Activated naive CD4-positive, alpha-beta T cell treated with anti-CD3 and anti-CD28 coated beads for 36 hours (primary cell): ENCODE measurements at regions of chr2 and their contacts with region 1.

Region 1: DNA sequence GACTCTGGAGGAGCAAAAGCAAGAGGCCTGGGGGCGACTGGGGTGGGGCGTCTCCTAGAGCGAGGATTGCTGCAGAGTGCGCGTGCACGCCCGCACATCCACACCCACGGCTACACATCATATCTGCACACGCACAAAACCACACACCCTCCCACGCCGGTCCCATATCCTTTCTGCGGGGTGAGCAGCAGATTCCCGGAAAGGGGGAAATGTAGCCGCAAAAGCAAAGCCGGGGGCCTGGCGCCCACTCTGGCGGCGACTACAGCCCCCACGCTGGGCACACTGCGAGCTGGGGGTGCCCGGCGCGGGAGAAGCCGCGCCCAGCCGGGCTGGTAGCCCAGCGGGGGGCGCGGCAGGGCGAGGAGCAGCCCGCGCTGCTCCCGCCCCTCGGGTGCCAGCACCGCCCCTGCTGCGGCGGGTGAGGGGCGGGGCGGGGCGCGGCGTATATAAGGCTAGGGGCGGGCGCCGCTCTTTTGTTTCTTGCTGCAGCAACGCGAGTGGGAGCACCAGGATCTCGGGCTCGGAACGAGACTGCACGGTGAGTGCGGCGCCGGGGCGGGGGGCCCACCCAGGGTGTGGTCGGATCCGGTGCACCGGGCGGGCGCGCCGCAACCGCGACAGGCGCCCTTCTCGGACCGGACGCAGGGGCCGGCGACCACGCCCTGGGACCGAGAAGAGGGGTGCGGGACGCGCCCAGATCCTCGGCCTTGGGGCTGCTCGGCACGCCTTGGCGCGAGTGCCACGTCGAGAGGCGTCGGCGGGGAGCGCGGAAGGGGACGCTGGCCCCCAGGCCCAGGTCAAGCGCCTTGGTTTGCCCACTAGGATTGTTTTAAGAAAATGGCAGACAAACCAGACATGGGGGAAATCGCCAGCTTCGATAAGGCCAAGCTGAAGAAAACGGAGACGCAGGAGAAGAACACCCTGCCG is at the start of gene TMSB10:
- DNase-seq: peak; percentile 82
- H3K4me3 Mint-ChIP-seq: peak within 1 kb of the TSS; percentile 86
- H3K27ac Mint-ChIP-seq: peak within 1 kb of the TSS; percentile 92
- H3K4me1 Mint-ChIP-seq: peaks cover 43% of the 10 kb centered on the region
- H3K27me3 Mint-ChIP-seq: no peaks in the 10 kb centered on the region
- total RNA-seq, gene TMSB10: 1,772 to 1,864 TPM

Region 2: DNA sequence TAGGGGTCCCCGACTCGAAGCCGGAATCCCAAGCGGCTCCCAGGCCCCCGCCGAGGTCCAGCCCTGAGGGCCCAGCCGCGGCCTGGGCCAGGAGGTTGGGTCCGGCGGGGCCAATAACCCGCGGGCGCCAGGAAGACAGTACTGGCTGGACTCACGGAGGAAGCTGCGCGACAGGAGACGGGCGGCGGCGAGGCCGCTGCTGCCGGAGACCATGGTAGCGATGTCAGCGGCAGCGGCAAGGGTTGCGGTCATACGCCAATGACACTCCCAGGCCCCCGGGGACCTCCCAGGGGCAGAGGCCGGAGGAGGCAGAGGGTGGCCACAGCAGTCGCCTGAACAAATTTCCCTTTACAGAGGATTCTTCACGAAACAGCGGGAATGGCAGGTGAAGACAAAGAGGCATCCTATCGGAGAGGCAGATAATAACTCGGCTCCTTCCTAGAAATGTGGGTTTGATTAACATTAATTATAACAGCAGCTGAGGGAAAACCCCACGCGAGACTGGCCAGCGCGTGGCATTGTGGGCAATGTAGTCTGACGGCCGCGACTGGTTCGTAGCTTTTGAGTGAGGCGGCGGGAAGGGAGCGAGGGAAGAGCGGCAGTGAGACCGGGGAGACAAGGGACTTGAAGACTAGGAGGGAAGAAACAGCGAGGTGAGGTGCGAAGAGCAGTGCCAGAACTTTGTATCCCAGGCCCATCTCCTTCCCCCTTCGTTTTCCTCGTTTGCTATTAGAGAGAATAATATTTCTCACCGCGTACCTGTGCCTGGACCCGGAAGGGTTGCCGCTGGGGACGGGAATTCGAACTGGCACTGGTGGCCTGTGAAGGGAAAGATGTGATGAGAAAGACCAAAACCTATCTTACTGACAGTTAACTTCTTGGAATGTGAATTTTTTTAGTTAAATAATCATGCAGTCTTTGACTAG is 446.2 kb before region 1 on chr2 and contains the start of gene SUCLG1:
- CTCF ChIA-PET with region 1: no interaction called
- intact Hi-C with region 1: no loop called
- DNase-seq: peak; percentile 89
- H3K4me3 Mint-ChIP-seq: peak within 1 kb of the TSS; percentile 86
- H3K27ac Mint-ChIP-seq: peak within 1 kb of the TSS; percentile 92
- H3K4me1 Mint-ChIP-seq: peaks cover 40% of the 10 kb centered on the region
- H3K27me3 Mint-ChIP-seq: no peaks in the 10 kb centered on the region
- total RNA-seq, gene SUCLG1: 75.3 to 80.7 TPM

Region 3: GRCh38 chr2:84888401-84889276 is 16.8 kb before region 1 on chr2:
- CTCF ChIA-PET with region 1: interaction called, 4 read pairs
- intact Hi-C with region 1: loop called (anchors 1 kb)
- DNase-seq: peak; percentile 73
- H3K4me3 Mint-ChIP-seq: peak overlapping the region; percentile 74
- H3K27ac Mint-ChIP-seq: peak overlapping the region; percentile 95
- H3K4me1 Mint-ChIP-seq: peaks cover 53% of the 10 kb centered on the region
- H3K27me3 Mint-ChIP-seq: no peaks in the 10 kb centered on the region

Region 4: GRCh38 chr2:84894758-84895520 is 10.5 kb before region 1 on chr2:
- CTCF ChIA-PET with region 1: interaction called, 3 read pairs
- intact Hi-C with region 1: loop called (anchors 1 kb)
- DNase-seq: peak; percentile 44
- H3K4me3 Mint-ChIP-seq: peak overlapping the region; percentile 59
- H3K27ac Mint-ChIP-seq: peak overlapping the region; percentile 91
- H3K4me1 Mint-ChIP-seq: peaks cover 60% of the 10 kb centered on the region
- H3K27me3 Mint-ChIP-seq: no peaks in the 10 kb centered on the region

Region 5: GRCh38 chr2:84919885-84920580 is 14.6 kb after region 1 on chr2:
- CTCF ChIA-PET with region 1: interaction called, 43 read pairs
- intact Hi-C with region 1: loop called (anchors 1 kb)
- DNase-seq: peak; percentile 75
- H3K4me3 Mint-ChIP-seq: peak overlapping the region; percentile 61
- H3K27ac Mint-ChIP-seq: peak overlapping the region; percentile 90
- H3K4me1 Mint-ChIP-seq: peaks cover 59% of the 10 kb centered on the region
- H3K27me3 Mint-ChIP-seq: no peaks in the 10 kb centered on the region

Region 6: GRCh38 chr2:85248773-85249509 is 343.5 kb after region 1 on chr2:
- CTCF ChIA-PET with region 1: no interaction called
- intact Hi-C with region 1: no loop called
- DNase-seq: no peak
- H3K4me3 Mint-ChIP-seq: no peak overlapping the region
- H3K27ac Mint-ChIP-seq: no peak overlapping the region
- H3K4me1 Mint-ChIP-seq: no peaks in the 10 kb centered on the region
- H3K27me3 Mint-ChIP-seq: no peaks in the 10 kb centered on the region